Activated CD8-positive, alpha-beta T cell treated with anti-CD3 and anti-CD28 coated beads for 36 hours (primary cell): ENCODE measurements at regions of chr17 and their contacts with region 1.

Region 1: GRCh38 chr17:4966844-4967538 is 626 bp downstream of the SPAG7 start:
- DNase-seq: peak; percentile 97
- ATAC-seq: peak; percentile 83
- H3K4me3 Mint-ChIP-seq: no peak overlapping the region
- H3K27ac Mint-ChIP-seq: no peak overlapping the region
- H3K4me1 Mint-ChIP-seq: peaks cover 35% of the 10 kb centered on the region
- H3K27me3 Mint-ChIP-seq: no peaks in the 10 kb centered on the region
- CTCF ChIP-seq: no peak

Region 2: GRCh38 chr17:4893721-4894490 is 73.1 kb before region 1 on chr17:
- CTCF ChIA-PET with region 1: no interaction called
- POLR2A ChIA-PET with region 1: no interaction called
- intact Hi-C with region 1: no loop called
- DNase-seq: no peak
- ATAC-seq: no peak
- H3K4me3 Mint-ChIP-seq: no peak overlapping the region
- H3K27ac Mint-ChIP-seq: no peak overlapping the region
- H3K4me1 Mint-ChIP-seq: peaks cover 4% of the 10 kb centered on the region
- H3K27me3 Mint-ChIP-seq: no peaks in the 10 kb centered on the region
- CTCF ChIP-seq: no peak

Region 3: DNA sequence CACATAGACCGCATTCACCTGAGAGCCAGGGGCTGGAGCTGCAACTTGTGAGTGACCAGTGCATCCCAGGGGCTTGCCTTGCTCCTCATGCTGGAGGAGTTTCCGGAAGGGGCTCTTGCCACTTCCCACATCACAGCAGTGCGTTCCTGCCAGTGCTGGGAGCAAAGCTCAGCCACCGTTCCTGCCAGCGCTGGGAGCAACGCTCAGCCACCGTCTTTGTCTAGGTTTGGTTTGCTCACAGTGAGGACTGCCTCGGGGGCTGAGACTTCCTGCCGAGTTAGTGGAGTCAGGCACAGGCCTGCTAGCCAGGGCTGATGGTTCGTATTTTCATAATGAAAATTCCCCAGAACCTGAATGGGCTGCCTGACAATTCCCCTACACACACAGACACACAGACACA is 58.7 kb before region 1 on chr17:
- CTCF ChIA-PET with region 1: interaction called, 11 read pairs
- POLR2A ChIA-PET with region 1: interaction called, 5 read pairs
- intact Hi-C with region 1: no loop called
- DNase-seq: peak; percentile 31
- ATAC-seq: peak; percentile 11
- H3K4me3 Mint-ChIP-seq: no peak overlapping the region
- H3K27ac Mint-ChIP-seq: no peak overlapping the region
- H3K4me1 Mint-ChIP-seq: peaks cover 12% of the 10 kb centered on the region
- H3K27me3 Mint-ChIP-seq: no peaks in the 10 kb centered on the region
- CTCF ChIP-seq: no peak

Region 4: GRCh38 chr17:4948931-4949320 is 18.1 kb before region 1 on chr17:
- CTCF ChIA-PET with region 1: interaction called, 9 read pairs
- POLR2A ChIA-PET with region 1: interaction called, 627 read pairs
- intact Hi-C with region 1: loop called (anchors 1 kb)
- DNase-seq: peak; percentile 85
- ATAC-seq: peak; percentile 35
- H3K4me3 Mint-ChIP-seq: peak overlapping the region; percentile 97
- H3K27ac Mint-ChIP-seq: peak overlapping the region; percentile 99
- H3K4me1 Mint-ChIP-seq: peaks cover 32% of the 10 kb centered on the region
- H3K27me3 Mint-ChIP-seq: no peaks in the 10 kb centered on the region
- CTCF ChIP-seq: no peak

Region 5: GRCh38 chr17:4980644-4981216 is 13.7 kb after region 1 on chr17:
- CTCF ChIA-PET with region 1: interaction called, 30 read pairs
- POLR2A ChIA-PET with region 1: interaction called, 75 read pairs
- intact Hi-C with region 1: no loop called
- DNase-seq: peak; percentile 62
- ATAC-seq: peak; percentile 95
- H3K4me3 Mint-ChIP-seq: no peak overlapping the region
- H3K27ac Mint-ChIP-seq: peak overlapping the region; percentile 64
- H3K4me1 Mint-ChIP-seq: peaks cover 17% of the 10 kb centered on the region
- H3K27me3 Mint-ChIP-seq: no peaks in the 10 kb centered on the region
- CTCF ChIP-seq: peak; percentile 89

Region 6: DNA sequence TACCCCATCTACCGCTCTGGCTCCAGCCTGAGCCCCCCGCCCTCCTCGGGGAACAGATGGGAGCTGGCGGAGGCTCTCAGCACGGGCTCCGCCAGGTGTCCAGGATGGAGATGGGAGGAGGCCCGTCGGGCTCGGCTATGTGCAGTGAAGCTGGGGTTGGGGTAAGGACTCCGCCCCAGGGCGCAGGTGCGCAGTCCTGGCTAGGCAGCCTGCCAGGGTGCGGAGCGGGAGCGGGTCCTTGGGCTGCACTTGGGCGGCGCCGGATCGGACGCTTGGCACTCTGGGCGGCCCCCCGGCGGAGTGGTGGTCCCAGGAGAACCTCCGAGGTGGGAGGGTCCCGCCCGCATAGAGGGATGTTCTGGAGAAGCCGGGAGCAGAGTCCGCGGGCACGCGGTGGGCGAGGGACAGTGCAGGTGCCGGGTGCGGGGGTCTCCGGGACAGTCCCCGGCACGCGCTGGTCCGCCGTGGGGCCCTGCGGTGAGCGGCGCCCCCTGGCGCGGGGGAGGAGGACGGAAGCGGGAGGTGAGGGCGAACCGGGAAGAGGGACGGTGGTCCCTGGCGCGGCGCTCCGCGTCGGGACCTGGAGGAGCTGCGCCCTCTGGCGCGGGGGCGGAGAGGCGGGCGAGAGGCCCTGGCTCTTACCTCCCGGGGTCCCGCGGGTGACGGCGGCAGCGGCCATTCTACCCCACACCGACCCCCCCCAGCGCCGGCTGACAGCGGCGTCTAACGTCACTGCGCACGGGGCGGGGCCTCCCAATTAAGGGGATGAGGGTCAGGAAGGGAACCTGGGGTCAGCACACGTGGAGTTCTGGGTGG is 20.2 kb after region 1 on chr17 and contains the start of gene CAMTA2:
- CTCF ChIA-PET with region 1: interaction called, 5 read pairs
- POLR2A ChIA-PET with region 1: interaction called, 75 read pairs
- intact Hi-C with region 1: no loop called
- DNase-seq: peak; percentile 92
- ATAC-seq: peak; percentile 88
- H3K4me3 Mint-ChIP-seq: peak within 1 kb of the TSS; percentile 85
- H3K27ac Mint-ChIP-seq: peak within 1 kb of the TSS; percentile 92
- H3K4me1 Mint-ChIP-seq: peaks cover 30% of the 10 kb centered on the region
- H3K27me3 Mint-ChIP-seq: no peaks in the 10 kb centered on the region
- CTCF ChIP-seq: peak; percentile 64
- total RNA-seq, gene CAMTA2: 91.5 to 99.0 TPM